Psoas muscle (tissue), 8 donors: ENCODE measurements at regions of chr6 and their contacts with region 1.

Region 1: DNA sequence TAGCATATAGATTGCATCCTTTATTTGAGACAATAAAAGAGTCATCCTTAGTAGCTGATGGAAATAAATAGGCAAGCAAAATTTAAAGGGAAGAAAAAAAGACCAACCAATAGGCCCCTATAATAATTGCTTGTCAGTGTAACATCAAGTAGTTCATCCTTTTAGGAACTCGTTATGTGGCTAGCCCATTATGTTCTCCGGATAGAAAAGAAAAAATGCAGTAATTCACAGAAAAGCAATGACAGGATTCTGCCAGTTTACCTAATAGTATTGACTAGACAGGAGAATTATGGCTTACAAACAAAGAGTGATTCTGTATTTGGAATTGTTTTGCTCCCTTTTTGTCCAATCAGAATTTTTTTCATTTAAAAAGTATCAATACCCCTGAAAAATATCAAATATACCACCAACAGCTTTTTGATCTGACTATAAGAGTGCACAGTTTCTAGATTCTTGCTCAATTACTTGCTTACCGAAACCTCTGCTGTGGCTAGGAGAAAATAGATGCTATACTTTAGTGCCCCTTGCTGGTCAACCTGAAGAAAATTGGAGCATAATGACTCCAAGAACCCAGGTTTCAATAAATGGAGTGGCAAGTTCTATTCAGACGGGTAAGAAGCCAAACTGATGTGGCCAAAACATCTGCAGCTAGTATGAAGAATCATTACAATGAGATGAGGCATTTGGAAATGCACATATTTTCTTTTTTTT is 91.5 kb upstream of the SASH1 start:
- DNase-seq: no peak
- ATAC-seq: peak in 3 of 4 donors; percentile 61 to 80 (median 64)
- H3K4me3 ChIP-seq: no peak overlapping the region
- H3K27ac ChIP-seq: no peak overlapping the region
- H3K4me1 ChIP-seq: peaks cover 3% of the 10 kb centered on the region
- H3K27me3 ChIP-seq: no peaks in the 10 kb centered on the region
- CTCF ChIP-seq: peak; percentile 51

Region 2: GRCh38 chr6:148177589-148178233 is 73.4 kb before region 1 on chr6:
- intact Hi-C with region 1: loop called in 1 of 2 experiments (anchors 5 kb)
- DNase-seq: peak; percentile 61 to 71
- ATAC-seq: peak in 1 of 4 donors; percentile 22
- H3K4me3 ChIP-seq: no peak overlapping the region
- H3K27ac ChIP-seq: no peak overlapping the region
- H3K4me1 ChIP-seq: no peaks in the 10 kb centered on the region
- H3K27me3 ChIP-seq: no peaks in the 10 kb centered on the region
- CTCF ChIP-seq: peak; percentile 82

Region 3: GRCh38 chr6:148186916-148187315 is 64.2 kb before region 1 on chr6:
- intact Hi-C with region 1: loop called in 1 of 2 experiments (anchors 5 kb)
- DNase-seq: no peak
- ATAC-seq: no peak
- H3K4me3 ChIP-seq: no peak overlapping the region
- H3K27ac ChIP-seq: no peak overlapping the region
- H3K4me1 ChIP-seq: no peaks in the 10 kb centered on the region
- H3K27me3 ChIP-seq: no peaks in the 10 kb centered on the region
- CTCF ChIP-seq: no peak